Panc1 (cell line): ENCODE measurements at regions of chr17 and their contacts with region 1.

Region 1: GRCh38 chr17:46193626-46194392 is 580 bp upstream of the KANSL1 start:
- DNase-seq: peak; percentile 47
- ATAC-seq: peak; percentile 93
- H3K4me3 ChIP-seq: peak overlapping the region; percentile 76 to 87
- H3K27ac ChIP-seq: peak overlapping the region; percentile 87
- H3K4me1 ChIP-seq: peaks cover 34% of the 10 kb centered on the region
- H3K27me3 ChIP-seq: no peaks in the 10 kb centered on the region
- CTCF ChIP-seq: no peak; the same call in 1 of the 2 replicates

Region 2: GRCh38 chr17:45371414-45372327 is 822.1 kb before region 1 on chr17:
- CTCF ChIA-PET with region 1: interaction called, 10 read pairs
- POLR2A ChIA-PET with region 1: no interaction called
- in situ Hi-C with region 1: no loop called
- intact Hi-C with region 1: no loop called
- DNase-seq: peak; percentile 54
- ATAC-seq: peak; percentile 94
- H3K4me3 ChIP-seq: peak overlapping the region in 1 of 2 experiments; percentile 30; a peak in 3 of 4 replicates
- H3K27ac ChIP-seq: peak overlapping the region; percentile 100
- H3K4me1 ChIP-seq: peaks cover 53% of the 10 kb centered on the region
- H3K27me3 ChIP-seq: no peaks in the 10 kb centered on the region
- CTCF ChIP-seq: no peak

Region 3: GRCh38 chr17:46035112-46035818 is 158.5 kb before region 1 on chr17:
- CTCF ChIA-PET with region 1: interaction called, 10 read pairs
- POLR2A ChIA-PET with region 1: no interaction called
- in situ Hi-C with region 1: no loop called
- intact Hi-C with region 1: loop called (anchors 10 kb)
- DNase-seq: no peak
- ATAC-seq: no peak
- H3K4me3 ChIP-seq: no peak overlapping the region
- H3K27ac ChIP-seq: no peak overlapping the region
- H3K4me1 ChIP-seq: no peaks in the 10 kb centered on the region
- H3K27me3 ChIP-seq: no peaks in the 10 kb centered on the region
- CTCF ChIP-seq: no peak

Region 4: GRCh38 chr17:46044286-46044928 is 149.4 kb before region 1 on chr17:
- CTCF ChIA-PET with region 1: interaction called, 3 read pairs
- POLR2A ChIA-PET with region 1: no interaction called
- in situ Hi-C with region 1: no loop called
- intact Hi-C with region 1: loop called (anchors 10 kb)
- DNase-seq: peak; percentile 42
- ATAC-seq: peak; percentile 86
- H3K4me3 ChIP-seq: no peak overlapping the region
- H3K27ac ChIP-seq: no peak overlapping the region
- H3K4me1 ChIP-seq: no peaks in the 10 kb centered on the region; the same call in 1 of the 2 replicates
- H3K27me3 ChIP-seq: no peaks in the 10 kb centered on the region
- CTCF ChIP-seq: peak; percentile 81

Region 5: DNA sequence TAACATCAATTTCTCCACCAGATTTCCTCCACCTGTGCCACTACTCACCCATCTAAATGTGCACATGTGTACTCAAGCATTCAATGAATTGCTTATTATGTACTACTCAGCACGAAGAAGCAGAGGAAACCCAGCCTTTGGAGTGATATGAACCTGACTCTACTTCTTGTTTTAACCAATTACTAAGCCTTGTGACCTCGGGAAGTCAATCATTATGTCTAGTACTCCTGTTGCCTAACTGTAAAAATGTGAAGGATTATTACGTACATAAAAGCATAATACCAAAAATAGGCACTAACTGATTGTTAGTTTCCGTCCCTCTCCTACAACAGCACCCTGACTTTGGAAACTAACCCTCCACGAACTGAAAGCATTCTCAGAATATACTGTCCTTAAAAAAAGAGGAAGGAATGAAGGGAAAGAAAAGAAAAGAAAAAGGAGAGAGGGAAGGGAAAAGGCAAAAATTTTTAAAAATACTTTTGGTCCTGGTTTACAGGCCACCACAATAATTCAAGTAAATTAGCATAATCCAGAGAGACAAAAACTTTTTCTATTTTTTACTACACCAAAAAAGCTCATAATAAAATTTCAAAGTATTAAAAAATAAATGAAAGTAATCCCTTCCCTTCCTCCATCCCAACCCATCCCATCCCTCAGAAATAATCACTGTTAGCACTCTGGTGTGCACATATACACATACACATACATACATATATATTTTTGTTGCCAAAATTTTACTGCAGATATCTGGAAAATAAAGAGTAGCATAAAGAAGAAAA is 54.2 kb before region 1 on chr17:
- CTCF ChIA-PET with region 1: interaction called, 19 read pairs
- POLR2A ChIA-PET with region 1: no interaction called
- in situ Hi-C with region 1: no loop called
- intact Hi-C with region 1: no loop called
- DNase-seq: no peak
- ATAC-seq: no peak
- H3K4me3 ChIP-seq: no peak overlapping the region
- H3K27ac ChIP-seq: no peak overlapping the region
- H3K4me1 ChIP-seq: peaks cover 3% of the 10 kb centered on the region; the same call in 1 of the 2 replicates
- H3K27me3 ChIP-seq: no peaks in the 10 kb centered on the region
- CTCF ChIP-seq: no peak

Region 6: GRCh38 chr17:46166692-46167249 is 27.0 kb before region 1 on chr17:
- CTCF ChIA-PET with region 1: interaction called, 10 read pairs
- POLR2A ChIA-PET with region 1: interaction called, 3 read pairs
- in situ Hi-C with region 1: no loop called
- intact Hi-C with region 1: no loop called
- DNase-seq: no peak
- ATAC-seq: no peak
- H3K4me3 ChIP-seq: no peak overlapping the region
- H3K27ac ChIP-seq: no peak overlapping the region
- H3K4me1 ChIP-seq: peaks cover 30% of the 10 kb centered on the region
- H3K27me3 ChIP-seq: no peaks in the 10 kb centered on the region
- CTCF ChIP-seq: no peak

Region 7: GRCh38 chr17:46212634-46213435 is 19.0 kb after region 1 on chr17:
- CTCF ChIA-PET with region 1: interaction called, 15 read pairs
- POLR2A ChIA-PET with region 1: interaction called, 3 read pairs
- in situ Hi-C with region 1: no loop called
- intact Hi-C with region 1: loop called (anchors 2 kb)
- DNase-seq: peak; percentile 51
- ATAC-seq: peak; percentile 91
- H3K4me3 ChIP-seq: no peak overlapping the region
- H3K27ac ChIP-seq: no peak overlapping the region
- H3K4me1 ChIP-seq: no peaks in the 10 kb centered on the region; the same call in 1 of the 2 replicates
- H3K27me3 ChIP-seq: no peaks in the 10 kb centered on the region
- CTCF ChIP-seq: peak; percentile 91